CD8-positive, alpha-beta memory T cell (primary cell): ENCODE measurements at regions of chr7 and their contacts with region 1.

Region 1: GRCh38 chr7:149872419-149873073 is 1.2 kb upstream of the ATP6V0E2 start:
- DNase-seq: no peak
- H3K4me3 ChIP-seq: peak overlapping the region; percentile 77
- H3K4me3 Mint-ChIP-seq: peak overlapping the region; percentile 88 to 97 (median 89)
- H3K27ac ChIP-seq: peak overlapping the region; percentile 67
- H3K27ac Mint-ChIP-seq: peak overlapping the region in 7 of 8 donors; percentile 71 to 92 (median 83)
- H3K4me1 ChIP-seq: peaks cover 71% of the 10 kb centered on the region
- H3K4me1 Mint-ChIP-seq: peaks cover 71 to 83% (median 78%) of the 10 kb centered on the region in 3 donors
- H3K27me3 ChIP-seq: no peaks in the 10 kb centered on the region
- H3K27me3 Mint-ChIP-seq: no peaks in the 10 kb centered on the region

Region 2: GRCh38 chr7:149771721-149772240 is 100.8 kb before region 1 on chr7:
- CTCF ChIA-PET with region 1: no interaction called
- POLR2A ChIA-PET with region 1: no interaction called
- DNase-seq: peak; percentile 76 to 88 (median 79)
- H3K4me3 ChIP-seq: peak overlapping the region; percentile 58
- H3K4me3 Mint-ChIP-seq: peak overlapping the region; percentile 59 to 88 (median 75)
- H3K27ac ChIP-seq: peak overlapping the region; percentile 38
- H3K27ac Mint-ChIP-seq: no peak overlapping the region
- H3K4me1 ChIP-seq: peaks cover 7% of the 10 kb centered on the region
- H3K4me1 Mint-ChIP-seq: peaks cover 0 to 16% (median 4%) of the 10 kb centered on the region in 3 donors
- H3K27me3 ChIP-seq: no peaks in the 10 kb centered on the region
- H3K27me3 Mint-ChIP-seq: peaks cover 0 to 2% of the 10 kb centered on the region in 2 donors

Region 3: GRCh38 chr7:149861446-149862045 is 11.0 kb before region 1 on chr7:
- CTCF ChIA-PET with region 1: interaction called, 14 read pairs
- POLR2A ChIA-PET with region 1: no interaction called
- DNase-seq: peak in 1 of 5 donors; percentile 52
- H3K4me3 ChIP-seq: no peak overlapping the region
- H3K4me3 Mint-ChIP-seq: no peak overlapping the region
- H3K27ac ChIP-seq: no peak overlapping the region
- H3K27ac Mint-ChIP-seq: peak overlapping the region in 1 of 8 donors; percentile 46
- H3K4me1 ChIP-seq: peaks cover 58% of the 10 kb centered on the region
- H3K4me1 Mint-ChIP-seq: peaks cover 33 to 53% (median 49%) of the 10 kb centered on the region in 3 donors
- H3K27me3 ChIP-seq: no peaks in the 10 kb centered on the region
- H3K27me3 Mint-ChIP-seq: peaks cover 0 to 1% of the 10 kb centered on the region in 2 donors